Vagina (tissue), 2 donors: ENCODE measurements at regions of chr4 and their contacts with region 1.

Region 1: DNA sequence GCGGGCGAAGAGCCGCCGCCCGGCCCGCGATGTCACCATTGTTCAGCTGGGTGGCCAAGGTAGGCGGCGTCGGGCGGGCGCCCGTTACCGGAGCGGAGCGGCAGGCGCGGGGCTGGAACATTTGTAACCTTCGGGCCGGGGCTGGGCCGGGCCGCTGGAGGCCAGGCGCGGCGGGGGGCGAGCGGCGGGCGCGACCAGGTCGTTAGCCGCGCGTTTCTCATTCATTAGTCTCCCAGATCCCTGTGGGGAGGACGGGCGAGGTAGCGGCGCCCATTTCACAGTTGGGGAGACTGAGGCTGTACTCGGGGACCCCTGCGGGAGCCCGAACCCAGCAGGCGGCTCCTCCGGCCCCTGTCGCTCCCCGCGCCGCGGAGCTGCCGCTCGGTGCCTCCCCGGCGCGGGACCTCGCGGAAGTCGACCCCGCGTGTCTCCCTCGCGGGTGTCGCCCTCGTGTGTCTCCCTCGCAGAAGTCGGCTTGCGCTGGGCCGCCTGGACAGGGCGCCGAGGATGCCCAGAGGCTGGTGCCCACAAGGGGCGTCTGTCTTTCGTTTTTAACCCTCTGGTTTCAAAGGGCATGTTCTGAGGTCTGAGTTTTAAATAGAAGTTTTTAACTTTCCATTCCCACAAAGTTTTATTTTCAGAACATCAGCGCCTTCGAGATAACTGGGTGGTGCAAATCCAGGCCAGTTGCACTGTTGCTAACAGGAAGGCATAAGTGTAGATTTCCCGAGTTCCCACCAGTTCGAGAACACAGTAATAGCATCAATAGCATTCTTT is 17.5 kb downstream of the PTTG2 start:
- DNase-seq: no peak
- H3K4me3 ChIP-seq: peak overlapping the region; percentile 90 to 96
- H3K27ac ChIP-seq: peak overlapping the region; percentile 98
- H3K4me1 ChIP-seq: peaks cover 31% of the 10 kb centered on the region
- H3K27me3 ChIP-seq: no peaks in the 10 kb centered on the region
- CTCF ChIP-seq: peak; percentile 31 to 50 (median 39)
- POLR2A ChIP-seq: no peak

Region 2: GRCh38 chr4:37891260-37892159 is 86.1 kb before region 1 on chr4:
- intact Hi-C with region 1: loop called (anchors 10 kb)
- DNase-seq: no peak
- H3K4me3 ChIP-seq: peak overlapping the region; percentile 77 to 83
- H3K27ac ChIP-seq: peak overlapping the region; percentile 88
- H3K4me1 ChIP-seq: peaks cover 16% of the 10 kb centered on the region
- H3K27me3 ChIP-seq: no peaks in the 10 kb centered on the region
- CTCF ChIP-seq: no peak
- POLR2A ChIP-seq: no peak

Region 3: GRCh38 chr4:38034986-38035882 is 57.6 kb after region 1 on chr4:
- intact Hi-C with region 1: loop called (anchors 10 kb)
- DNase-seq: no peak
- H3K4me3 ChIP-seq: no peak overlapping the region
- H3K27ac ChIP-seq: peak overlapping the region; percentile 26
- H3K4me1 ChIP-seq: no peaks in the 10 kb centered on the region
- H3K27me3 ChIP-seq: no peaks in the 10 kb centered on the region
- CTCF ChIP-seq: peak; percentile 27 to 77 (median 66)
- POLR2A ChIP-seq: no peak

Region 4: GRCh38 chr4:38867478-38868058 is 889.9 kb after region 1 on chr4 and contains the start of gene FAM114A1:
- intact Hi-C with region 1: loop called (anchors 10 kb)
- DNase-seq: no peak
- H3K4me3 ChIP-seq: peak within 1 kb of the TSS; percentile 89 to 94
- H3K27ac ChIP-seq: peak within 1 kb of the TSS; percentile 98
- H3K4me1 ChIP-seq: peaks cover 48% of the 10 kb centered on the region
- H3K27me3 ChIP-seq: no peaks in the 10 kb centered on the region
- CTCF ChIP-seq: no peak
- POLR2A ChIP-seq: peak in 1 of 2 donors; percentile 59
- total RNA-seq, gene FAM114A1: 105 TPM